Esophagus muscularis mucosa (tissue), 4 donors: ENCODE measurements at regions of chr11 and their contacts with region 1.

Region 1: GRCh38 chr11:6682936-6683861 is at the start of gene MRPL17:
- DNase-seq: peak; percentile 100
- H3K4me3 ChIP-seq: peak within 1 kb of the TSS; percentile 71 to 91 (median 79)
- H3K27ac ChIP-seq: peak within 1 kb of the TSS; percentile 88 to 95 (median 90)
- H3K4me1 ChIP-seq: peaks cover 21 to 25% (median 24%) of the 10 kb centered on the region in 4 donors
- H3K27me3 ChIP-seq: no peaks in the 10 kb centered on the region
- CTCF ChIP-seq: peak; percentile 91 to 95 (median 94)
- EP300 ChIP-seq: no peak
- POLR2A ChIP-seq: peak; percentile 27
- total RNA-seq, gene MRPL17: 13.3 to 22.9 (median 19.4) TPM

Region 2: GRCh38 chr11:6234387-6235107 is 448.7 kb before region 1 on chr11 and contains the start of gene FHIP1B:
- intact Hi-C with region 1: loop called (anchors 5 kb)
- DNase-seq: peak; percentile 100
- H3K4me3 ChIP-seq: peak within 1 kb of the TSS; percentile 68 to 93 (median 74)
- H3K27ac ChIP-seq: peak within 1 kb of the TSS; percentile 82 to 92 (median 89)
- H3K4me1 ChIP-seq: peaks cover 9 to 36% (median 32%) of the 10 kb centered on the region in 4 donors
- H3K27me3 ChIP-seq: no peaks in the 10 kb centered on the region
- CTCF ChIP-seq: no peak
- EP300 ChIP-seq: no peak
- POLR2A ChIP-seq: peak; percentile 31
- total RNA-seq, gene FHIP1B: 22.6 to 39.3 (median 30.1) TPM

Region 3: GRCh38 chr11:6531267-6531752 is 151.9 kb before region 1 on chr11:
- intact Hi-C with region 1: loop called (anchors 5 kb)
- DNase-seq: no peak
- H3K4me3 ChIP-seq: no peak overlapping the region
- H3K27ac ChIP-seq: no peak overlapping the region
- H3K4me1 ChIP-seq: no peaks in the 10 kb centered on the region
- H3K27me3 ChIP-seq: no peaks in the 10 kb centered on the region
- CTCF ChIP-seq: peak; percentile 60 to 82 (median 80)
- EP300 ChIP-seq: no peak
- POLR2A ChIP-seq: no peak

Region 4: GRCh38 chr11:6603287-6604080 is 79.7 kb before region 1 on chr11 and contains the starts of genes ILK and RRP8:
- intact Hi-C with region 1: loop called (anchors 2 kb)
- DNase-seq: peak; percentile 97
- H3K4me3 ChIP-seq: peak within 1 kb of the TSS; percentile 80 to 99 (median 86)
- H3K27ac ChIP-seq: peak within 1 kb of the TSS; percentile 97 to 98 (median 98)
- H3K4me1 ChIP-seq: peaks cover 59 to 84% (median 76%) of the 10 kb centered on the region in 4 donors
- H3K27me3 ChIP-seq: no peaks in the 10 kb centered on the region
- CTCF ChIP-seq: peak; percentile 27 to 52 (median 47)
- EP300 ChIP-seq: no peak
- POLR2A ChIP-seq: peak; percentile 76
- total RNA-seq, gene ILK: 481 to 652 (median 606) TPM
- total RNA-seq, gene RRP8: 12.4 to 34.0 (median 27.0) TPM

Region 5: DNA sequence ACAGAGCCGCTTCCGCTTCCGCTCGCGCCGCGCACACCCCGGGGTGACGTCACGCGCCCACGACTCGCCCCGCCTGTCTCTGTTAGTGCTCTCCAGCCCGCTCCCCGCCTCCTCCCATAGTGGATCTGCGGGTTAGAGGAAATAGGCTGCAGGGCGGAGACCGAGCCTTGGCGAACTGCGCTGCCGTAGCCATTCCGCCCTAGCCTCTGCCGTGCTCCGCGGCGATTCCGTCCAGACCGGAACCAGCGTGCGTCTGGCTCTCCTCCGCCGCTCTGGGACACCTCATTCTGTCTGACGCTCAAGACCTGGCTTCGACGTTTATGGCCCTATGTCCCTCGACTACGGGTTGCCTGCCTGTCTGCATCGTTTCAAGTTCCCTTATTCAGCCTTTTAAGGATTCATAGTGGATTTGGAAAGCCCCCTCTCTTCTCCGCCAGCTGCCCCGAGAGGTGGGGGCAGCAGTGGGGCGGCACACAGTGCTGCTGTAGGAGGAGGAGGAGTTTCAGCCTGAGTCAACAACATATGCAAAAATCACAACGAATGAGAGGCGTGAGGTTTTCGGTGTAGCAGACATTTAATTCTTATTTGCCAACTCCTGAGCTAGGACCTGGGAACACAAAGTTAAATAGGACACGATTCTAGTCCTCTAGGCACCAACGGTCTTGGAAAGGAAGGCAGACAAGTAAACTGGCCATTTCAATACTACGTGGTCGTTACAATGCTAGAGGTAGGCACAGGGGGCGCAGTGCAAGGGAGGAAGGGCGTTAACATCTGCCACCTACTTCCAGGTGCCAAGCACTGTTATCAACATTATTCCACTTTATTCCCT is 70.8 kb before region 1 on chr11 and contains the start of gene TAF10:
- intact Hi-C with region 1: loop called (anchors 2 kb)
- DNase-seq: peak; percentile 98
- H3K4me3 ChIP-seq: peak within 1 kb of the TSS; percentile 79 to 98 (median 88)
- H3K27ac ChIP-seq: peak within 1 kb of the TSS; percentile 97 to 98 (median 98)
- H3K4me1 ChIP-seq: peaks cover 40 to 69% (median 61%) of the 10 kb centered on the region in 4 donors
- H3K27me3 ChIP-seq: no peaks in the 10 kb centered on the region
- CTCF ChIP-seq: peak; percentile 24 to 54 (median 52)
- EP300 ChIP-seq: no peak
- POLR2A ChIP-seq: peak; percentile 82
- total RNA-seq, gene TAF10: 24.2 to 51.1 (median 43.4) TPM

Region 6: DNA sequence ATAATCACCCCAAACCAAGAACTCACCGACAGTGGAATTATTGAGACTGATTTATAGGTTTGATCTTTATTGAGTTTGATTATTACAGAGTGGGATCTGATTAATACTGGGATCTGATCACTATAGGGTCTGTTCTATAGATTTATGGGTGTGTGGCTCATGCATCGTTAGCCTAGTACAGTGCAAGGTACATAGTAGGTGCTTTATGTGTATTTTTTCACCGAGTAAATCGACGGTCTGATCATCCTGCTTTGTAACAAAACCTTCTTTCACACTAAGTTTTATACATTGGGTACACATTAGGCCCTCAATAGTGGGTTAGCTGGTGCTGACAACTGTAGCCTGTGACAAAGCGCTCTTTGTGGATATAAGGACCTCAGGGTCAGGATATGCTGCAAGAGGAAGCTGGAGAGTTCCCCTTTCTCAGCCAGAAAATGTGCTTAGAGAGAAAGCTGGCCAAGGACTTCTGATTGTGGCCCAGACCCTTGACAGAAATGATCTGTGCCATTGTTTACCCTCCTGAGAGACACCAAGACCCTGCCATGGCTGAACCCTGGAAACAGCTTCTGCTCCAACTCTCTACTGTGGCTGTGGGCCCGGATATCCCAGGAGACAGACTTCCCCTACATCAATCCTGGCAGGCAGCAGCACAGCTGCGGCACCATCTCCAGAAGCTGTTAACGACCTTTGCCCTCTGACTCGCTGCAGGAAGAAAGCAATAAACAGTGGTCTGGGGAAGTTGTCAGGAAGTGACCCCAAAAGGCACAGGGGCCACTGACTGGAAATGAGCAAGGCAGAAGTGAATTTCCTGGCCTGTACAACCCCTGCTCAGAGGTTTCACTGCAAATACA is 47.9 kb before region 1 on chr11:
- intact Hi-C with region 1: no loop called
- DNase-seq: no peak
- H3K4me3 ChIP-seq: no peak overlapping the region
- H3K27ac ChIP-seq: peak overlapping the region; percentile 60 to 78 (median 62)
- H3K4me1 ChIP-seq: peaks cover 48 to 69% (median 59%) of the 10 kb centered on the region in 4 donors
- H3K27me3 ChIP-seq: no peaks in the 10 kb centered on the region
- CTCF ChIP-seq: no peak
- EP300 ChIP-seq: peak; percentile 52
- POLR2A ChIP-seq: no peak